CD4-positive, alpha-beta memory T cell (primary cell): ENCODE measurements at regions of chr7 and their contacts with region 1.

Region 1: DNA sequence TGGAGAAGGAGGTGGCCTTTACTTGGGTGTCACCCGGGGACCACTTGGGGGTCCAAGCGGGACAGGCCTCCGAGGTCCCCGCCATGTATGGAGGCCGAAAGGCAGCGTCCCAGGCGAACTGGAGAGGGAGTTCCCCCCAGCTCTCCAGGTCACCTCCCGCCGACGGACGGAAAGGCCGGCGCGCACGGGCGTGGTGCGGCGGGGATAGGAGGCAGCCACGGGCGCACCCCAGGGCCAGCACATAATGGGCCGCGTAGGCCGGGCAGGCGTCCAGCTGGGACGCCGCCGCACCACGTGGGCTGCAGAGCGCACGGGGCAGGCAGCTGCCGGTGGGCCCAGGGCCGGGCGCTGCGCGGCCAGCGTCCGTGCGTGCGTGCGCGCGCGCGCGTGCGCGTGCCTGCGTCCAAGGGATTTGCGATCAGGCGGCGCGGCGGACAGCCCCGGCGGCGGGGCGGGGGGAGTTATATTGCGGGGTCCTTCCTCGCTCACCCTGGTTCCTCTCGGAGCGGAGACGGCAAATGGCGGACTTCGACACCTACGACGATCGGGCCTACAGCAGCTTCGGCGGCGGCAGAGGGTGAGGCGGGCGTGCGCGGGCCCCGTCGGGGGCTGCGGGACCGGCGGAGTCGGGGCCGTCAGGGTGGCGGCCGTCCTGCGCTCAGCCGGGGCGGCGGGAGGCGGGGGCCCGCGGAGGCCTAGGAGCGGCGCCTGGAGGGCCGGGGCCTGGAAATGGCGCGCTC is at the start of gene EIF4H:
- DNase-seq: peak; percentile 93 to 95 (median 93)
- H3K4me3 ChIP-seq: peak within 1 kb of the TSS; percentile 87 to 89
- H3K4me3 Mint-ChIP-seq: peak within 1 kb of the TSS; percentile 88 to 94 (median 92)
- H3K27ac ChIP-seq: peak within 1 kb of the TSS; percentile 91
- H3K27ac Mint-ChIP-seq: peak within 1 kb of the TSS; percentile 90 to 97 (median 96)
- H3K4me1 ChIP-seq: peaks cover 48% of the 10 kb centered on the region
- H3K4me1 Mint-ChIP-seq: peaks cover 34 to 57% (median 44%) of the 10 kb centered on the region in 4 donors
- H3K27me3 ChIP-seq: no peaks in the 10 kb centered on the region
- H3K27me3 Mint-ChIP-seq: no peaks in the 10 kb centered on the region
- total RNA-seq, gene EIF4H: 167 to 168 TPM

Region 2: GRCh38 chr7:74023037-74023436 is 151.0 kb before region 1 on chr7:
- CTCF ChIA-PET with region 1: no interaction called
- POLR2A ChIA-PET with region 1: no interaction called
- intact Hi-C with region 1: no loop called
- DNase-seq: no peak
- H3K4me3 ChIP-seq: no peak overlapping the region
- H3K4me3 Mint-ChIP-seq: no peak overlapping the region
- H3K27ac ChIP-seq: no peak overlapping the region
- H3K27ac Mint-ChIP-seq: no peak overlapping the region
- H3K4me1 ChIP-seq: peaks cover 4% of the 10 kb centered on the region
- H3K4me1 Mint-ChIP-seq: peaks cover 0 to 22% (median 7%) of the 10 kb centered on the region in 4 donors
- H3K27me3 ChIP-seq: peaks cover 8% of the 10 kb centered on the region
- H3K27me3 Mint-ChIP-seq: peaks cover 26 to 28% of the 10 kb centered on the region in 2 donors

Region 3: DNA sequence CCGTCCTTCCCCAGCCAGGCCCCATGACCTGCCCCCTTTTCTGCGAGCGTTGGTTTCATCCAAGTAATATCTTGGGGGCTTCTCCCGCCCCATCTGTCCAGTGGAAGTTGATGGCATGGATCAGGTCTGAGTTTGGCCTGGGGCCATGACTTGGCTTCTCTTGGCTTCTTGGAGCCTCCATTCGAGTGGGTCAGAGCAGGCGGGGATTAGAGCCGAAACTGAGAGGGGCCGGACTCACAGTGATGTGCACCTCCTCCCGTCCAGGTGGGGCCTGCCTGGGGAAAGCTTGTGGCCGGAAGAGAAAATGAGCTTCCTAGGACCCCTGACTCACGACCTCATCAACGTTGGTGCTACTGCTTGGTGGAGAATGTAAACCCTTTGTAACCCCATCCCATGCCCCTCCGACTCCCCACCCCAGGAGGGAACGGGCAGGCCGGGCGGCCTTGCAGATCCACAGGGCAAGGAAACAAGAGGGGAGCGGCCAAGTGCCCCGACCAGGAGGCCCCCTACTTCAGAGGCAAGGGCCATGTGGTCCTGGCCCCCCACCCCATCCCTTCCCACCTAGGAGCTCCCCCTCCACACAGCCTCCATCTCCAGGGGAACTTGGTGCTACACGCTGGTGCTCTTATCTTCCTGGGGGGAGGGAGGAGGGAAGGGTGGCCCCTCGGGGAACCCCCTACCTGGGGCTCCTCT is 105.5 kb before region 1 on chr7:
- CTCF ChIA-PET with region 1: interaction called, 9 read pairs
- POLR2A ChIA-PET with region 1: interaction called, 9 read pairs
- intact Hi-C with region 1: loop called (anchors 2 kb)
- DNase-seq: no peak
- H3K4me3 ChIP-seq: no peak overlapping the region
- H3K4me3 Mint-ChIP-seq: no peak overlapping the region
- H3K27ac ChIP-seq: no peak overlapping the region
- H3K27ac Mint-ChIP-seq: peak overlapping the region in 1 of 7 donors; percentile 55
- H3K4me1 ChIP-seq: no peaks in the 10 kb centered on the region
- H3K4me1 Mint-ChIP-seq: peaks cover 0 to under 1% (median 0%) of the 10 kb centered on the region in 4 donors
- H3K27me3 ChIP-seq: no peaks in the 10 kb centered on the region
- H3K27me3 Mint-ChIP-seq: no peaks in the 10 kb centered on the region

Region 4: DNA sequence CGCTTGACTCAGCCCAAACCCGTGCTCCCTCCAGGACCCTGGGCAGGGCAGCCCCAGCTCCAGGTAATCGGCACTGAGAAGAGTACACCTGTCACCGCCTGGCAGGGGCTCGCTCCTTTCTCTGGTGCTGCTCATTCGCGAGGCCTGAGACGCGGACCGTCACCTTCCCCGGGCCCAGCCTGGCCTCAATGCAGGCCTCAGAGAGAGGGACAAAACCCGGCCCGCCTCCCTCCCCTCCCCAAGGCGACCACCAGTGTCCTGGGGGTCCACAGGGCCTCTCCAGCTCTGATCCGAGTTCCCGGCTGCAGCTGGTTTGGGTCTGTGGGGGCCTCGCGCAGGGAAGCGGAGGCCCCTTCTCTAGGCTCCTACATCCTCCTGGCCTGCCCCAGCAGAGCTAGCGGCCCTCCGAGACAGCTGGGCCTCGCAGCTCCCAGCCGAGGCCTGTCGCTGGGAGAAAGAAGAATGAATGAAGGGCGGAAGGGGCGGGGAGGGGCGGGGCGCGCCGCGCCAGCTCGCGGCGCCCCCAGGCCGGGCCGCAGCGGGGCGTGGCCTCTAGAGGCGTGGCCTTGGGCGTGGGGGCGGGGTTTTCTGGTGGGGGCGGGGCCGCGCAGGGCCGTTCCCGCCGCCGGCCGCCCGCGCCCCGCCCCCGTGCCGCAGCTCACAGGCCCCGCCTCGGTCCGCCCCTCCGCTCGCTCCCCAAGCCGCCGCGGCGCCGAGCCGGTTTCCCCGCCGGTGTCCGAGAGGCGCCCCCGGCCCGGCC is 90.7 kb before region 1 on chr7 and contains the start of gene LIMK1:
- CTCF ChIA-PET with region 1: no interaction called
- POLR2A ChIA-PET with region 1: interaction called, 30 read pairs
- intact Hi-C with region 1: loop called (anchors 1 kb)
- DNase-seq: peak; percentile 78 to 87 (median 83)
- H3K4me3 ChIP-seq: peak within 1 kb of the TSS; percentile 42 to 43
- H3K4me3 Mint-ChIP-seq: peak within 1 kb of the TSS; percentile 75 to 87 (median 82)
- H3K27ac ChIP-seq: peak within 1 kb of the TSS; percentile 49
- H3K27ac Mint-ChIP-seq: peak within 1 kb of the TSS; percentile 4 to 93 (median 76)
- H3K4me1 ChIP-seq: peaks cover 16% of the 10 kb centered on the region
- H3K4me1 Mint-ChIP-seq: peaks cover 4 to 15% (median 9%) of the 10 kb centered on the region in 4 donors
- H3K27me3 ChIP-seq: no peaks in the 10 kb centered on the region
- H3K27me3 Mint-ChIP-seq: no peaks in the 10 kb centered on the region
- total RNA-seq, gene LIMK1: 13.4 to 15.1 TPM

Region 5: DNA sequence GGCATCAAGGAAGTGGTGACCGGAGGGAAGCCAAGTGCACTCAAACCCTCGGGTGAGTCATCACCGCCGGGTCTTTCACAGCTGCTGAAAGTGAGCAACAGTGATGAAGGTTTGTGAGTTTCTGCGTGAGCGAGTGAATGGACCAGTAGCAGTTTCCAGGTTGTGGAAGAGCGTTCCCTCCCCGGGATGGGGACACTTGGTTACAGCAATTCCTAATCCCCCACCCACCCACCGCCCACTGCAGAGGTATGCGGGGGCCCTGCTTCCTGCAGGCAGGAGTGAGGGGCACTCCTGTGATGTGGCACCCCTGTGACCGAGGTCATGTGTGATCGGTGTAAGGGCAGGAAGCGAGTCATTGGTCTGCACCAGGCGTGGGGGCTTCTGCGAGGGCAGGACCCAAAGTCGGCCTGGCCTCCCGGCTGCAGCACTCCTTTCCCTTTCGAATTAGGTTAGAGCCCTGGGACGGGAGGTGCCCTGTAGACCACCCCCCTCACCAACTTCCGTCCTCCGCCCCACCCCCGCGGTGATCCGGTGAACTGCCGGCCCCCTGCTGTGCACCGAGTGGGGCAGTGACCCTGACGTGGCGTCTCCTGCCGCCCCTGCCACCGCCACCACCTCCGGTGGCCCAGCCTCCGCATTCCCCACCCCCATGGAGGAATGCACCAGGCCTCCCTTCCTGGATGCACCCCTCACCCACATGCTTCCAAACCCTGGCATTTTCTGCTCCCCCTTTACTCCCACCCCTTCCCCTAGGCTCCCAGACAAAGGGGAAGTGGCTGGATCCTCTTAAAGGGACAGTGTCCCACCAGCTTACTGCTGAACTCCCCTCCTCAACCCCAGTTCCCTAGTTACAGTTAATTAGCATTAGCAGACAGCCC is 79.6 kb before region 1 on chr7:
- CTCF ChIA-PET with region 1: no interaction called
- POLR2A ChIA-PET with region 1: interaction called, 12 read pairs
- intact Hi-C with region 1: no loop called
- DNase-seq: peak; percentile 34 to 86 (median 51)
- H3K4me3 ChIP-seq: peak overlapping the region; percentile 19 to 69
- H3K4me3 Mint-ChIP-seq: peak overlapping the region; percentile 82 to 96 (median 90)
- H3K27ac ChIP-seq: peak overlapping the region; percentile 63
- H3K27ac Mint-ChIP-seq: peak overlapping the region; percentile 93 to 97 (median 94)
- H3K4me1 ChIP-seq: peaks cover 19% of the 10 kb centered on the region
- H3K4me1 Mint-ChIP-seq: peaks cover 6 to 18% (median 16%) of the 10 kb centered on the region in 4 donors
- H3K27me3 ChIP-seq: no peaks in the 10 kb centered on the region
- H3K27me3 Mint-ChIP-seq: no peaks in the 10 kb centered on the region

Region 6: DNA sequence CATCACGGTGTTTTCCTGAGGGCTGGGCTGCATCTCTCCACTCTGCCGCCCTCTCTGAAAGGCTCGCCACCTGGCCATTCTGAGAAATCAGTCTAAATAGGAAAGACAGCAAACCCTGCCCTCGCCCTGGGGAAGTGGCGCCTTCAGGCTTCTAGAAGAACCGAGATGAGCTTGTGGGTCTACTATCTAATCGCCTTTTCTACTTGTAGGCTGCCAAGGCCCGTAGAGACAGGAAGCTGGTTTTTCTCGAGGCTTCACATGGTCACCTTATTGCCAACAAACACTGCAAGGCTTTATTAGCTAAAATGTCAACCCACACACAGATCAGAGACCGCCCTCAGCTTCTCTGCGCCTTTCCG is 57.2 kb after region 1 on chr7:
- CTCF ChIA-PET with region 1: no interaction called
- POLR2A ChIA-PET with region 1: no interaction called
- intact Hi-C with region 1: no loop called
- DNase-seq: no peak
- H3K4me3 ChIP-seq: no peak overlapping the region
- H3K4me3 Mint-ChIP-seq: no peak overlapping the region
- H3K27ac ChIP-seq: no peak overlapping the region
- H3K27ac Mint-ChIP-seq: peak overlapping the region in 2 of 7 donors; percentile 4 to 35
- H3K4me1 ChIP-seq: no peaks in the 10 kb centered on the region
- H3K4me1 Mint-ChIP-seq: peaks cover 3 to 5% (median 4%) of the 10 kb centered on the region in 4 donors
- H3K27me3 ChIP-seq: no peaks in the 10 kb centered on the region
- H3K27me3 Mint-ChIP-seq: no peaks in the 10 kb centered on the region

Region 7: GRCh38 chr7:74254129-74254857 is 80.3 kb after region 1 on chr7 and contains the start of gene RFC2:
- CTCF ChIA-PET with region 1: no interaction called
- POLR2A ChIA-PET with region 1: interaction called, 13 read pairs
- intact Hi-C with region 1: loop called (anchors 1 kb)
- DNase-seq: peak; percentile 93 to 99 (median 96)
- H3K4me3 ChIP-seq: peak within 1 kb of the TSS; percentile 81 to 100
- H3K4me3 Mint-ChIP-seq: peak within 1 kb of the TSS; percentile 91 to 97 (median 94)
- H3K27ac ChIP-seq: peak within 1 kb of the TSS; percentile 92
- H3K27ac Mint-ChIP-seq: peak within 1 kb of the TSS; percentile 94 to 97 (median 96)
- H3K4me1 ChIP-seq: peaks cover 22% of the 10 kb centered on the region
- H3K4me1 Mint-ChIP-seq: peaks cover 16 to 37% (median 23%) of the 10 kb centered on the region in 4 donors
- H3K27me3 ChIP-seq: no peaks in the 10 kb centered on the region
- H3K27me3 Mint-ChIP-seq: no peaks in the 10 kb centered on the region
- total RNA-seq, gene RFC2: 15.7 to 17.7 TPM

Region 8: DNA sequence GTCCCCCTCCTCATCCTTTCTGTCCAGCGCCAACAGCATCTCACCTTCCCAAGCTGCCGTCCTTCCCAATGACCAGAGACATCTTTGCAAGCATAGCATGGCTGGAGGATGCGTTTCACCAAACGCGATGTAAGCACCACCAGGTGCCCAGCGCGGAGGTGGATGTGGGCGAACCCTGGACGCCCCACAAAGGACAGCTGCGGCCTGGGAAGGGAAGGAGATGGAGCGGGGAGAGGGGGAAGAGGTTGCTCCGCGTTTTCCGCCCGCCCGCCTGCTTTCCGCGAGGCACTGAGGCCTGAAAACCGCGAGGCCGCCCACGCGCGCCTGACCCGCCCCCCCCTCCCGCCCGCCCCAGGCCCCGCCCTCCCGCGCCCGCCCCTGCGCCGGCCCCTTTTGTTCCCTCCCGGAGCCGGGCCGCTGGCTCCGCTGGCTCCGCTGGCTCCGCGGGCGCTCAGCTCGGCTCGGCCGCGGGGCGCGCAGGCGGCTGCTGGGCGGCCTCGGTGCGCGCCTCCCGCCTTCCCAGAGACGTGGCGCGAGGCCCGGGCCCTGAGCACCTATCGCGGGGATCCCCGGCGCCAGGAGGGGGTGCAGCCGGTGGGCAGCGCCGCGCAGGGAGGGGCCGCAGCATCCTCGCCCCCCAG is 115.1 kb after region 1 on chr7 and contains the start of gene CLIP2:
- CTCF ChIA-PET with region 1: no interaction called
- POLR2A ChIA-PET with region 1: no interaction called
- intact Hi-C with region 1: loop called (anchors 1 kb)
- DNase-seq: peak; percentile 67 to 73 (median 71)
- H3K4me3 ChIP-seq: peak within 1 kb of the TSS; percentile 60 to 65
- H3K4me3 Mint-ChIP-seq: peak within 1 kb of the TSS; percentile 87 to 97 (median 90)
- H3K27ac ChIP-seq: no peak within 1 kb of the TSS
- H3K27ac Mint-ChIP-seq: peak within 1 kb of the TSS; percentile 71 to 92 (median 85)
- H3K4me1 ChIP-seq: peaks cover 24% of the 10 kb centered on the region
- H3K4me1 Mint-ChIP-seq: peaks cover 15 to 35% (median 18%) of the 10 kb centered on the region in 4 donors
- H3K27me3 ChIP-seq: no peaks in the 10 kb centered on the region
- H3K27me3 Mint-ChIP-seq: peaks cover 3 to 7% of the 10 kb centered on the region in 2 donors
- total RNA-seq, gene CLIP2: 3.0 to 5.7 TPM